GM12878 (cell line): ENCODE measurements at regions of chr2 and their contacts with region 1.

Region 1: DNA sequence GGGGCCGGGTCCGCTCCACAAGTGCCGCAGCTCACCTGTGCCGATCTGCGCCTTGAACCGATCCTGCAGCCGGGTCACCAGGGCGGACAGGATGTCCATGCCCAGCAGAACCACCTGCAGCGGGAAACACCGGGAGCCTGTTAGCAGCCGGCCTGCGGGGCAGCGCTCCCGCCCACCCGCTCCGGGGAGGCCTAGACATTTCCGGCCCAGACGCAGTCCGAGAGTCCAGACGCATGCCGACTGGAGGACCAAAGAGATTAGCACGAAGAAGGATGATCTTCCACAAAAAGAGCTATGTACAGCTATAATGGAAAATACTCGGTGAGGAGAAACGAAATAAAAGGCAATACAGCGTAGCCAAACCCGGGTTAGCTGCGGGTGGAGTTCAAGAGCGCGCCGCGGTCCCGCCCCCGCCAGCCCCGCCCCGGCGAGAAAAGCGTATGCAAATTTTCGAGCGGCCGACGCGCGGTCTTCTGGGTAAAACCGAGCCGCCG is 421 bp upstream of the RNU4ATAC start:
- DNase-seq: peak; percentile 52
- ATAC-seq: peak; percentile 82
- H3K4me3 ChIP-seq: peak overlapping the region; percentile 79
- H3K27ac ChIP-seq: peak overlapping the region; percentile 98
- H3K4me1 ChIP-seq: peaks cover 18% of the 10 kb centered on the region
- H3K27me3 ChIP-seq: no peaks in the 10 kb centered on the region
- CTCF ChIP-seq: no peak
- EP300 ChIP-seq: no peak
- POLR2A ChIP-seq: no peak
- RAD21 ChIP-seq: no peak

Region 2: DNA sequence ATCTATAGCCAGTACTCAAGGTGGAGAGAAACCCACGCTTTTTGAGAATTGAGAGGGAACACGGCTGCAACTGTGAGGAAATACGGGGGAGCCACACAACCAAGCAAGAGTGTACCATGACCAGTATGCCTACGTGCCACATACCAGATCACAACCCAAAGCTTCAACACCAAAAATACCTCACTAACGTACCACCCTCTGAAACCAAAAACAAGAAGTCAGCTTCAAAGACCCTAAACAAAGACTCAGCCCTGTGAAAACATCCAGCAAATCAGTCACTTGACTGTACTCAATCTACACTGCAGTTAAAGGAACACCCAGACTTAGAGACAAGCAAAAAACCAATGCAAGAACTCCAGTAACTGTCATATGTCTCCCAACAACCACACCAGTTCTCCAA is 17.4 kb after region 1 on chr2:
- CTCF ChIA-PET with region 1: interaction called, 9 read pairs
- POLR2A ChIA-PET with region 1: interaction called, 18 read pairs
- RAD21 ChIA-PET with region 1: interaction called, 5 read pairs
- SMC1A ChIA-PET with region 1: interaction called, 52 read pairs
- in situ Hi-C with region 1: no loop called
- intact Hi-C with region 1: no loop called
- DNase-seq: peak; percentile 68
- ATAC-seq: peak; percentile 52
- H3K4me3 ChIP-seq: no peak overlapping the region
- H3K27ac ChIP-seq: peak overlapping the region; percentile 58
- H3K4me1 ChIP-seq: peaks cover 21% of the 10 kb centered on the region
- H3K27me3 ChIP-seq: no peaks in the 10 kb centered on the region
- CTCF ChIP-seq: no peak
- EP300 ChIP-seq: no peak
- POLR2A ChIP-seq: no peak
- RAD21 ChIP-seq: no peak

Region 3: DNA sequence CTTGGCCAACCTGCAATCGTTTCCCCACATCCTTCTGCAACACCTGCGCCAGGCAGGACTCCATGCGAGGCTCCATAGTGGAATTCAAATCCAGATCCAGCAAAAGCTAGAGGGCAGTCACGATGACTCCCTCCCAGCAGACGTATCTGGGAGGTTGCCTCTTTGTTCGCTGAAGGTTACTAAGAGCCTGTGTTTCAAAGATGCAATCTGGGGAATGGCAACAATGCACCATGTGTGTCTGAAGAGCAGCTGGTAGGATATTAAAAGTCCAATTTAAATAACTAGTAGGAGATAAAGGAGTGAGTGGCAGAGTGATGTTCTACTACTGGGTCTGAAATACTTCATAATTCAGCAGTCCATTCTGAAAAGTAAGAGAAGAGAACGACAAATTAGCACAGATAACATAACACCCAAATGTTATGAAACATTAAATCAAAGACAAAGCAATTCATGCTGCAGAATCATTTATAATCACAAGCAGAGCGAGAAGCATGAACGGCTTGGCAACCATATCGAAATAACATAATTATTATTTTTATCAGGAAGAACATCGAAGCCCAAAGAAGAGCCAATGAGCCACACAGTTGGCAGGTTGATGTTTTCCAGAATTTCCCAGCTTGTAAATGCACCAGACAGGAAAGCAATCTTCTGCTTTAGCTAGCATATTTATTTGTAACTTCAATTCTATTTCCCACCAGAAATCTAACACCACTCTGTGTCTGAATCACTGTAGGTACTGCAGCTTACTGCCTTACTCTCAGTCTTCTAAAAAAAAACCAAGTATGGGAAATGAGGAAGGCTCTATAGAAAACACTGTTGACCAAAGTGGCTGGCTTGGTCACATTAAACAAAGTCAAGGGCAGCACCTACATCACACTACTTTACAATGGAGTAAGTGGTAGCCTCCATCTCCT is 75.8 kb after region 1 on chr2:
- CTCF ChIA-PET with region 1: no interaction called
- POLR2A ChIA-PET with region 1: no interaction called
- RAD21 ChIA-PET with region 1: no interaction called
- SMC1A ChIA-PET with region 1: no interaction called
- in situ Hi-C with region 1: no loop called
- intact Hi-C with region 1: no loop called
- DNase-seq: no peak
- ATAC-seq: no peak
- H3K4me3 ChIP-seq: no peak overlapping the region
- H3K27ac ChIP-seq: no peak overlapping the region
- H3K4me1 ChIP-seq: no peaks in the 10 kb centered on the region; the same call in 1 of the 2 replicates
- H3K27me3 ChIP-seq: no peaks in the 10 kb centered on the region
- CTCF ChIP-seq: no peak
- EP300 ChIP-seq: no peak
- POLR2A ChIP-seq: no peak
- RAD21 ChIP-seq: no peak

Region 4: GRCh38 chr2:121649596-121650314 is 119.5 kb after region 1 on chr2:
- CTCF ChIA-PET with region 1: interaction called, 9 read pairs
- POLR2A ChIA-PET with region 1: interaction called, 14 read pairs
- RAD21 ChIA-PET with region 1: interaction called, 27 read pairs
- SMC1A ChIA-PET with region 1: interaction called, 13 read pairs
- in situ Hi-C with region 1: loop called (anchors 5 kb)
- intact Hi-C with region 1: loop called (anchors 1 kb)
- DNase-seq: peak; percentile 89
- ATAC-seq: peak; percentile 95
- H3K4me3 ChIP-seq: peak overlapping the region; percentile 98
- H3K27ac ChIP-seq: peak overlapping the region; percentile 95
- H3K4me1 ChIP-seq: no peaks in the 10 kb centered on the region
- H3K27me3 ChIP-seq: no peaks in the 10 kb centered on the region
- CTCF ChIP-seq: no peak
- EP300 ChIP-seq: 0 out of 4 replicates have a peak, but pooled peaks have one; percentile 4 to 19
- POLR2A ChIP-seq: peak; percentile 74
- RAD21 ChIP-seq: 0 out of 2 replicates have a peak, but pooled peaks have one; percentile 1

Region 5: DNA sequence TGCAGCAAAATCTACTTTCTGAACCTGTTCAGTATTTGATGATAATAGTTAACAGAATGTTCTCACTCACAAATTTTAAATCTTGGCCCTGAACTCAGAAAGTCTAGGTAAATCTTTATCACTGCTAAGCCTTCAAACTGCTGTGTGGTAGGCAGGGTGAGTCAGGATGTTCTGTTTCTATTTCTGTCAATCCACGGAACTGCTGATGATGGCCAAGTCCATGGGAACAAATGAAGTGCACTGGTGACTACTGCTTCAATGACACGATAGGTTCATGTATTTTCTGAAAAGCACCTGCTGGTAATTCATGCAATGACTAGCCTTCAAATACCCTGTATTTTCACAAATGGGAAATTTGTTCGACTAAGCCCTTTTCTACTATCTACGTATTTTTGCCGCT is 192.2 kb after region 1 on chr2:
- CTCF ChIA-PET with region 1: interaction called, 9 read pairs
- POLR2A ChIA-PET with region 1: no interaction called
- RAD21 ChIA-PET with region 1: interaction called, 16 read pairs
- SMC1A ChIA-PET with region 1: interaction called, 16 read pairs
- in situ Hi-C with region 1: loop called (anchors 5 kb)
- intact Hi-C with region 1: loop called (anchors 1 kb)
- DNase-seq: no peak
- ATAC-seq: no peak
- H3K4me3 ChIP-seq: no peak overlapping the region
- H3K27ac ChIP-seq: no peak overlapping the region
- H3K4me1 ChIP-seq: no peaks in the 10 kb centered on the region
- H3K27me3 ChIP-seq: no peaks in the 10 kb centered on the region
- CTCF ChIP-seq: no peak
- EP300 ChIP-seq: no peak
- POLR2A ChIP-seq: no peak
- RAD21 ChIP-seq: no peak

Region 6: DNA sequence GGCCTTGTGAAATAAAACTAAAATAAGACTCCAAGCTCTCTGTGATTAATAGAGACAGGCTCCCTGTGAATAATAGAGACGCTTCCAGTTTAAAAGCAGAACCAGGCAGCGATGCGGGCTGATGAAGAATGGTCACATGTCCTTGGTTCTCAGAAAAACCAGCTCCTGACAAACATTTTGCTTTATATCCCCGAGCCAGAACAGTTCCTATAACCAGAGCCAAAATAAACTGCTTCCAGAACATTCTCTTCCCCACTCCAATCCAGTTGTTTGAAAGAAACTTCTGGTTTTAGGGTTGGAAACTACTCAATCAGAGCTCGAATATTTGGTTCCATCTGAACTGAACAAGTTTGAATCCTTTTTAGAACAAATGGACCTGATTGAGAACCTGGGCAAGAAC is 438.9 kb after region 1 on chr2:
- CTCF ChIA-PET with region 1: no interaction called
- POLR2A ChIA-PET with region 1: no interaction called
- RAD21 ChIA-PET with region 1: no interaction called
- SMC1A ChIA-PET with region 1: no interaction called
- in situ Hi-C with region 1: no loop called
- intact Hi-C with region 1: loop called (anchors 10 kb)
- DNase-seq: no peak
- ATAC-seq: no peak
- H3K4me3 ChIP-seq: no peak overlapping the region
- H3K27ac ChIP-seq: no peak overlapping the region
- H3K4me1 ChIP-seq: no peaks in the 10 kb centered on the region
- H3K27me3 ChIP-seq: no peaks in the 10 kb centered on the region
- CTCF ChIP-seq: no peak
- EP300 ChIP-seq: no peak
- POLR2A ChIP-seq: no peak
- RAD21 ChIP-seq: no peak